Posterior vena cava (tissue), 2 donors: ENCODE measurements at regions of chr7 and their contacts with region 1.

Region 1: DNA sequence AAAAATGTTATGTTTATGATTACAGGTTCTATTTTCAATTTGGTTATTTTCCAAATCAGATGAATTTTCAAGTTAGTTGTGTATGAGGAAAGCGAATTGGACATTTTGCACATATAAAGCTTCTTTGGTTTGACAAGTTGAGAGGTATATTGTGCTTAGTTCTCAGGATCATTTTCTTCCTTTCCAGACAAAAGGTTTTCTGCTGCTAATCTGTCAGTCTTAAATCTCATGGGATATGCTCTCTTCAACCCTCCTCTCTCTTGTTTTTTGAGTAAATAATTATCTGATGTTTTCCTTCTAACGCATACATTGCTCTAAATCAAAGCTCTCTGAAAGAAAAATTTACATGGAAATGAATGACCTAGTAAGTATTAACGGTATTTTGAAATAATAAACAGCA is 77.9 kb downstream of the PPP1R3A start:
- DNase-seq: no peak

Region 2: GRCh38 chr7:113873554-113874151 is 32.7 kb after region 1 on chr7:
- intact Hi-C with region 1: no loop called
- DNase-seq: no peak

Region 3: DNA sequence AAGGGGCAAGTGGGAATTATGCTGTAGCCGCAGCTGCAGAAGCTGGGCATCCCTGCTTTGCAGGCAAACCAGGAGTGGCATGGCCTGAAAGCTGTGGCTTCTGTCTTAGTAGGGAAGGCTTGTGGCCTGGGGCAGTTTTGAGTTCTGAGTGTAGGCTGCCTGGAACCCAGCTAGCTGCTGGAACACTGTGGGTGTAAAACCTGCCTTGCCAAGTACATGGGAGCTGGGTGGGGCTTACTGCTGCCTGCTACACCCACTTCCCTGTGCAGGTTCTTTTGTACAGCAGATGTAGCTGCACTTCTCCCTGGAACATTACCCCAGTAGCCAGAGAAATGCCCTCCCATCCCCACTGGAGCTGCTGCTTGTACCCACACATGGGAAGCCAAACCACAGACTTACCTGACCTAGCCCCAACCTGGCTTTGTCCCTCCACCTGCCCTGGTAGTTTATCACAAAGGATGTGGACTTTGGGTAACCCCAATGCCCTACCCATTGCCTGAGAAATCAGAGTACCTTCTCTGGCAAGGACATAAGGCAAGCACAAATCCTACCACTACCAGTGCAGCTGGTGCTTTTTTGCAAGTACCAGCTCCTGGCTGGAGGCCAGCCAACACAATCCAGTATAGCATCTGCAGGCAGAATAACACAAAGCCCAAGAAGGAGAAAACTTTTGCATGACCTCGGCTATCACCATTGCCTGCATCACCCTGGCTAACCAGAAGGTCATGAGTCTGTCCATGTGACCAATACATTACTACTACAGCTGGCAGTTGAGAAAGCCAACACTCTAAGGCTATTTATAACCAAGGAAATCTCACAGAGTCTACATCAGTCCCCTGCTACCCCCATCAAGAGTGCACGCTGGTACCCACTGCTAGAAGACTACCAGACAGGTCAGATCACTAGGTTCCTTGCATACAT is 104.3 kb after region 1 on chr7:
- intact Hi-C with region 1: loop called in 1 of 2 experiments (anchors 2 kb)
- DNase-seq: no peak